ENCODE measurements at regions of chr2 and their contacts with region 1.

Region 1: DNA sequence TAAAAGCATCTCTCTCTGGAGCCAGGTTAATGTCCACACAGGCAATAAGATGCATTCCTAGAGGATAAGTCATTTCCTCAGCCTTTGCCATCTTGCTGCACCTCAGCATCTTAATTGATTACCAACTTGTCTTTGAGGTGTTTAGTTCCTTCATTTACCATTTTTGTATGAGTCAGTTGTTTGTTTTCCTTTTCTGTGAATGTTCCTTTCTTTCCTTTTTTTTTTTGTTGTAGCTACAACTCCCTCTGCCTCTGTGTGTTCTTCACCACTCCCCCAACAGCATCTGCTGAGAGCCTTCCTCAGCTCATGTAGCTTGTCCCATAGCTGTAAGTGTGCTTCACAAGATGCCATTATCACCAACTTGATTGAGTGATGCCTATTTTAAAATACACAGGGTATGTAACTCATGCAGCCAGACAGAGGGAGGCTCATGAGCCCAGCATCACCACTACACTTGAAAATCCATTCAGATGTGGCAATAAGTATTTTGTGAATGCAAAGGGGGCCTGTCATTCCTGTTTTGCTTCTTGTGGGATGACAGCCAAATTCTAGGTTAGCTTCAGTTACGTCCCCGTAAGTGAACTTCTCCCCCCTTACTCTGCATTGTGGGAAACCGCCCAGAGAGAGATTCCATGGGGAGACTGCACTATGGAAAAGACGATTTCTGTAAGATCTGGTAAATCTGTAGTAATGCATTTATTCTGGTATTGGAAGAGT is 315.9 kb upstream of the ZEB2 start:
- DNase-seq: no peak
- CTCF ChIP-seq: no peak

Region 2: GRCh38 chr2:144849612-144850011 is 13.8 kb after region 1 on chr2:
- CTCF ChIA-PET with region 1: interaction called, 11 read pairs
- POLR2A ChIA-PET with region 1: no interaction called
- DNase-seq: no peak
- CTCF ChIP-seq: no peak

Region 3: GRCh38 chr2:145156199-145156598 is 320.4 kb after region 1 on chr2:
- CTCF ChIA-PET with region 1: no interaction called
- POLR2A ChIA-PET with region 1: no interaction called
- DNase-seq: no peak
- CTCF ChIP-seq: no peak